Activated CD8-positive, alpha-beta T cell treated with anti-CD3 and anti-CD28 coated beads, Interleukin-2, amount 10 ng/mL, durations not matched to agents 7 days and 5 days (primary cell): ENCODE measurements at regions of chr9 and their contacts with region 1.

Region 1: GRCh38 chr9:93064392-93065134 is 6.1 kb downstream of the SUSD3 start:
- DNase-seq: peak; percentile 98
- ATAC-seq: peak; percentile 91
- H3K4me3 Mint-ChIP-seq: peak overlapping the region; percentile 79
- H3K27ac Mint-ChIP-seq: peak overlapping the region; percentile 96
- H3K4me1 Mint-ChIP-seq: peaks cover 87% of the 10 kb centered on the region
- H3K27me3 Mint-ChIP-seq: no peaks in the 10 kb centered on the region

Region 2: GRCh38 chr9:93028448-93029006 is 36.0 kb before region 1 on chr9:
- CTCF ChIA-PET with region 1: interaction called, 7 read pairs
- POLR2A ChIA-PET with region 1: interaction called, 23 read pairs
- DNase-seq: peak; percentile 83
- ATAC-seq: peak; percentile 85
- H3K4me3 Mint-ChIP-seq: peak overlapping the region; percentile 71
- H3K27ac Mint-ChIP-seq: peak overlapping the region; percentile 92
- H3K4me1 Mint-ChIP-seq: peaks cover 79% of the 10 kb centered on the region
- H3K27me3 Mint-ChIP-seq: no peaks in the 10 kb centered on the region

Region 3: DNA sequence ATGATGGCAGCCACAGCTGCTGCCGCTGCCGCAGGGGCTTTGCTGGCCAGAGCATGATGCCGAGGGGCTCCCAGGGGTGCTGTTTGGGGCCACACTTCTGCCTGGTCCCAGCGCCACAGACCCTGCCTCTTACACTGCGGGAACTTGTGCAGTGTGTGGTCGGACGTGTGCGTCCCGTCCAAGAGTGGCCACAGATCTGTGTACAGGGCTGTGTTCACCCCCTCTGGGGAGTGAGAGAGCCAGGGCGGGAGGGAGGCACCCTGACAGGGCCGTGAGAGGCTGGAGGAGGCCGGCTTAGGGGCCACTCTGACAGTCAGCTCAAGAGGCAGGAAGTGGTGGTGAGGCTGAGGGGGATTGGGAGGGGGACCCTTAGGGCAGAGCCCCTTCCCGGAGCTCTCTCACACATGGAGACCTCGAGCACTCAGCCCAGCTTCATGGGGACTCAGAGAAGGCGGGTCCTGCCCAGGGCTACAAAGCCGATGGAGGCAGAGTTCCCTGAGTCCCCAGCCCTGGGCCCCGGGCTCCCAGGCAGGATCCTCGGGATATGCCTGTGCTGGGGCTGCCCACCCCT is 18.4 kb after region 1 on chr9:
- CTCF ChIA-PET with region 1: interaction called, 11 read pairs
- POLR2A ChIA-PET with region 1: interaction called, 13 read pairs
- DNase-seq: no peak
- ATAC-seq: peak; percentile 57
- H3K4me3 Mint-ChIP-seq: no peak overlapping the region
- H3K27ac Mint-ChIP-seq: peak overlapping the region; percentile 83
- H3K4me1 Mint-ChIP-seq: peaks cover 42% of the 10 kb centered on the region
- H3K27me3 Mint-ChIP-seq: no peaks in the 10 kb centered on the region

Region 4: DNA sequence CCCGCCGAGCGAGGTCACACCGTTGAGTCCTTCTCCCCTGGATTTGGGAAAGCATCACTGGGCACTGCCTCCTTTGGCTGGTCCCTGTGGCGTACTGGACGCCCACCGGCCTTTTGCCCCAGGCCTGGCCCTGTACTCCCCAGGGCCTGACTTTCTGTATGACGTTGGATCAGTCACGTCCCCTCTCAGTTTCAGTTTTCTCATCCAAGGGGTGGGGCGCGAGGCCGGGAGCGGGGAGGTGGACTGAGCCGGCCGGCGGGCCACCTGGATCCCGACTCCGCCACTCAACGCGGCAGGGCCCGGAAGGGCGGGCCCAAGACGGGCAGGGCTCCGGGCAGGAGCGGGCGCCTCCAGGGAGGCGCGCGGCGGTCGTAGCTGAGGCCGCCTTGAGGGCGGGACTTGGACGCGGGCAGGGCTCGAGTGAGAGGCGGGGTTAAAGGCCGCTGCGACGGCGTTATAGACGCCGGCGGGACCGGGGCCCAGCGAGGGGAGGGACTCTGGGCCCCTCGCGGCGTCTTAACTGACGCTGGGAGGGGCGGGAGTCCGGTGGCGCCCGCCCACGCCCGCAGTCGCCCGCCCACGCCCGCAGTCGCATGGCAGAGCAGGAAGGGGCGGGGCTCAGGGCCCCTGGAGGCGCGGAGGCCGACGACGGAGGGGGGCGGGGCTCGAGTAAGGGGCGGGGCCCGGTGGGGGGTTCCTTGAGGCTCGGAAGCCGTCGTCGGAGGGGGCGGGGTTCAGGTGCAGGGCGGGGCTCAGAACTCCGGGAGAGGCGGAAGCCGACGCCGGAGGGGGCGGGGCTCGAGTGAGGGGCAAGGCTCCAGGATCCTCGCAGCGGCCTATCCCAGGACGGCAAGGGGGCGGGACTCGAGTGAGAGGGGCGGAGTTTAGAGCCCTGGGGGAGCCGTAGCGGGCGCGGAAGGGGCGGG is 30.9 kb after region 1 on chr9:
- CTCF ChIA-PET with region 1: interaction called, 4 read pairs
- POLR2A ChIA-PET with region 1: interaction called, 31 read pairs
- DNase-seq: peak; percentile 100
- ATAC-seq: peak; percentile 84
- H3K4me3 Mint-ChIP-seq: peak overlapping the region; percentile 74
- H3K27ac Mint-ChIP-seq: peak overlapping the region; percentile 98
- H3K4me1 Mint-ChIP-seq: peaks cover 79% of the 10 kb centered on the region
- H3K27me3 Mint-ChIP-seq: no peaks in the 10 kb centered on the region